ENCODE measurements at regions of chr3 and their contacts with region 1.

Region 1: DNA sequence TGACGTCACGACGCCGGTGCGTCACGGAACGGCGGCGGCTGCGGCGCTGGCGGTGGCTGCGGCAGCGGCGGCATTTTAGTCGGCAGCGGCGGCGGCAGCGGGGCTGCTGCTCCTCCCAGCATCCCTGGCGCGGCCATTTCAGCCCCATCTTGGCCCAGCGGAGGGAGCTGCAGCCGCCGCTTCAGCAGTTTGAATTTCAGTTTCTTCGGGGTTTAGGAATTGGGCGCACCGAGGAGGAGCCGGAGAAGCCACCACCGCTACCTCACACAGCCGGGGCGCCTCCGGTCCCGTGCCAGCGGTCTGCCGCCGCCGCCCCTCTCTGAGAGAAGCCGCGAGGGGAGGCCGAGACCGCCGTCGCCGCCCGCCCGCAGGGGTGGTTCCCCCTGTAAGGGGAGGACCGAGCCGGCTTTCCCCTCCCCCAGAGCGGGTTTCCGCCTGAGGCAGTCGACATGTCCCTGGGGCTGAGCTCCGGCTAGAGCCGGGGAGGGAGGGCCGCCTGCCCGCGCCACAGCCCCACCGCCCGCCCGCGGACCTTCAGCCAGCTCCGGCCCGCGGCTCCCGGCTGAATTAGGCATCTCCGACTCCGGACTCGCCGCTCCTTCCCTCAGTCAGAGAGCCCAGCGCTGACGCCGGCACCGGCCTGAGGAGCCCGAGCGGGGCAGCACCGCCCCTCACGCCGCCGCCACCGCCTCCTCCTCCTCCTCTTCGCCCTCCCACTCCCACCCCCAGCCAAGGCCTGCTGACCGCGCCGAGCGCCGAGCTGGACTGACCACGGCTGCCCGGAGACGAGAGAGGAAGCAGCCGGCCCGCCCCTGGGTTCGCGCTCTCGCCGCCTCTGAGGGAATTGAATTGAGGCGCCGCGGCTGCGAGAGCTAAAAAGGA is at the start of gene TSC22D2:
- DNase-seq: peak; percentile 79
- H3K4me3 ChIP-seq: peak within 1 kb of the TSS; percentile 96
- H3K27ac ChIP-seq: peak within 1 kb of the TSS; percentile 95
- H3K27me3 ChIP-seq: no peaks in the 10 kb centered on the region
- CTCF ChIP-seq: peak; percentile 21; the same call in 1 of the 2 replicates
- polyA plus RNA-seq, gene TSC22D2: 28.4 and 29.3 TPM in 2 replicates

Region 2: DNA sequence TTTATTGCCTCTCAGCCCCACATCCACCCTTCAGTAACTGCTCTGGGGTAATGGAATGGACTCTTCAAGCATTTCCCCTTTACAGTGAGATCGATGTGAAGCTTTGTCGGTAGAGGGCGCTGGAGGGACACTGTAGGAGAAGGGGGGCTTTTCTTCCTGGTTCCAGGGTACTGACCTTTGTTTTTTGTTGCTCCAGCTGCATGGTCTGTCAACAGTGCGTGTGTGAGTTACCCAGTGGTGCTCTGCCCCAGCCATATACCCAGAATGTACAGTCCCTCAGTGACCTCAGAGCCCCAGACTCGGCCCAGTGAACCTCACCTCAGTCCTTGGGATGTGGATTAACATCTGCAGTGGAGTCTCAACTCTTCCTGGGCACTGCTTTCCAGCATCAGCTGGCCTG is 180.6 kb before region 1 on chr3:
- CTCF ChIA-PET with region 1: interaction called, 16 read pairs
- POLR2A ChIA-PET with region 1: interaction called, 4 read pairs
- DNase-seq: no peak
- H3K4me3 ChIP-seq: no peak overlapping the region
- H3K27ac ChIP-seq: no peak overlapping the region
- H3K27me3 ChIP-seq: no peaks in the 10 kb centered on the region
- CTCF ChIP-seq: peak; percentile 85

Region 3: GRCh38 chr3:150248116-150248887 is 160.2 kb before region 1 on chr3:
- CTCF ChIA-PET with region 1: interaction called, 3 read pairs
- POLR2A ChIA-PET with region 1: interaction called, 25 read pairs
- DNase-seq: peak; percentile 89
- H3K4me3 ChIP-seq: no peak overlapping the region
- H3K27ac ChIP-seq: peak overlapping the region; percentile 82
- H3K27me3 ChIP-seq: no peaks in the 10 kb centered on the region
- CTCF ChIP-seq: no peak

Region 4: DNA sequence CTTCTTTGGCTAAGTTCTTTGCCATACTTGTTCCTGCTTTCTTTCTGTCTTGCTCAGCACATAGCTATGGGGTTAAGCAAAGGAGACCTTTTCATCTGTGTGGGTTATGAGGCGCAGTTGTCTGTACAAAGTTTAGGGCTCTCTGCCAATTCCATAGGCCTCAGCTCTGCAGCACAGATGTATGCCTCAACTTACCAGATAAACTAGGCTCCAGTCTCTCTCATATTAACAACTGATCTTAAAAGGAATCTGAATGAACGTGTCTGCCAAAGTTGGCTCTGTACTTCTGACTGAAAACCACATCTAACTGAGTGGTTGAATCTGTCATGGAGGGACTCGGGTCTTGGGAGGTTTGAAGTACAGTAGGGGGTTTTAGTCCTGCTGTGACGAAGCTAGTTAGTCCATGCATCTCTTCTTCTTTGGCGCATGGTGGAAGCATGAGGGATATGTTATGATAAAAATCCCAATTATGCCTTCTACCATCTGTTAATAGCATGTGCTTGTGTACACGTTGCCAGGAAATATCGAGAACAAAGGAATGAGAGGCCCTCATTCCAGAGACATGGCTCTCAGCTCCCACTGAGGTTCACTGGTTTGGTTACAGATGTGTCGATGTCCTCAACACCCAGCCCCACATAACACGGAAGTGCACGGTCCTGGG is 114.9 kb before region 1 on chr3:
- CTCF ChIA-PET with region 1: interaction called, 4 read pairs
- POLR2A ChIA-PET with region 1: interaction called, 27 read pairs
- DNase-seq: peak; percentile 58
- H3K4me3 ChIP-seq: no peak overlapping the region
- H3K27ac ChIP-seq: peak overlapping the region; percentile 89
- H3K27me3 ChIP-seq: no peaks in the 10 kb centered on the region
- CTCF ChIP-seq: no peak

Region 5: GRCh38 chr3:150371741-150372254 is 36.7 kb before region 1 on chr3:
- CTCF ChIA-PET with region 1: interaction called, 3 read pairs
- POLR2A ChIA-PET with region 1: interaction called, 27 read pairs
- DNase-seq: peak; percentile 97
- H3K4me3 ChIP-seq: peak overlapping the region; percentile 63
- H3K27ac ChIP-seq: peak overlapping the region; percentile 95
- H3K27me3 ChIP-seq: no peaks in the 10 kb centered on the region
- CTCF ChIP-seq: no peak

Region 6: GRCh38 chr3:150419076-150419868 is 10.8 kb after region 1 on chr3:
- CTCF ChIA-PET with region 1: no interaction called
- POLR2A ChIA-PET with region 1: interaction called, 10 read pairs
- DNase-seq: no peak
- H3K4me3 ChIP-seq: no peak overlapping the region
- H3K27ac ChIP-seq: no peak overlapping the region
- H3K27me3 ChIP-seq: no peaks in the 10 kb centered on the region
- CTCF ChIP-seq: no peak

Region 7: DNA sequence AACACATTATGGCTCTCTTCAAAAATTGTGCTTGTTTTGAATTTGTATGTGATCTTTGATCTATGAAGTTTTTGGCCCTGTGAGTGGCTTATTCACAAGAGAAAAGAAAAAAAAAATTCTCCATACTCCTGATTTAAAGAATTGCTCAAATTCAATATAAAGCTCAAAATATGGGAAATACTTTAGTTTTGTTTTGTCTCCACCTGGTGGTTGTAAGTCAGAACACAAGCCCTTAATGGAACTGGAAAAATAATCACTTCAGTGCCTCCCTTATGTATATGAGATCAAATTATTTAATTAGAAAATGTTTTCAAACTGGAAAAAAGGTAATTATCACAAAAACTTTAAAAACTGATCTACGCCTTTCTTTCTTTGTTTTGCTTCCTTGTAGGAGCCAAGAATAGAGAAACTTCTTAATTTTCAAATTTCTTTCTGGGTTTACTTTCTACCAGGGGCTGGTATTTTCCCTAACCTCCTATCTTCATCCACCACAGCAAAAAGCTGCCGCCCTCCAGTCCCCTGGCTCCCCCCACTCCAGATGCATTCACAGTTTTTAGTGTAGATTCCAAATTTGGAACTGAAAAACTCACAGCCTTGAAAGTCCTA is 87.2 kb after region 1 on chr3:
- CTCF ChIA-PET with region 1: interaction called, 21 read pairs
- POLR2A ChIA-PET with region 1: interaction called, 6 read pairs
- DNase-seq: peak; percentile 16
- H3K4me3 ChIP-seq: no peak overlapping the region
- H3K27ac ChIP-seq: no peak overlapping the region
- H3K27me3 ChIP-seq: no peaks in the 10 kb centered on the region
- CTCF ChIP-seq: peak; percentile 61

Measured in AG04450 (cell line).